ENCODE measurements at regions of chr9 and their contacts with region 1.

Region 1: DNA sequence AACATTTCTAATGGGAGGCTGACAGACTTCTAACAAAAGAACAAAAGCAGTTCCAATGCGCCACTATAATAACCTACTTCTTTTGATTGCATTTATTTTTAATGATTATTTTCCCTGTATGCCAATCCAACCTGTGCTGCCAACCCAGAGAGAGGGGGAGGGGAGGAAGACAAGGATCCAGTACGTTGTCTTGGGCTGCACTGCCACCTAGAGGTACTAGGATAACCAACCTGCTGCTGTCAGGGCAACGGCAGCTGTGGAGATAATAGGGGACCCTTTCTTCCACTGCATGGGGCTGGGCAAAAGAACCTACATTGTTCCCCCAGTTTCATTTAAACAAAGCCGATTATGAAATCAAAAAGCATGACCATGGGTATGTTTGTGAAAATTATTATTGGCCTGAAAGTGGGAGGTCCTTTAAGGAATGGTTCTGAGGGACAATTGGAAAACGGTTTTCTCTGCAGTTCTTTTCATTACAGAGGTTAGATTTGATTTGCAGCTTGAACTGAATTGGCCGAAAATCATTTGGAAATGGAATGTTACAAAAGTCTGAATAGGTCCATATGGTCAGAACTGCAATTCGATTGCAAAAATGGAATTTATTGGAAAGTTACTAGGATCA is 101.3 kb downstream of the RASEF start:
- DNase-seq: peak; percentile 48 to 96 (median 80)

Region 2: DNA sequence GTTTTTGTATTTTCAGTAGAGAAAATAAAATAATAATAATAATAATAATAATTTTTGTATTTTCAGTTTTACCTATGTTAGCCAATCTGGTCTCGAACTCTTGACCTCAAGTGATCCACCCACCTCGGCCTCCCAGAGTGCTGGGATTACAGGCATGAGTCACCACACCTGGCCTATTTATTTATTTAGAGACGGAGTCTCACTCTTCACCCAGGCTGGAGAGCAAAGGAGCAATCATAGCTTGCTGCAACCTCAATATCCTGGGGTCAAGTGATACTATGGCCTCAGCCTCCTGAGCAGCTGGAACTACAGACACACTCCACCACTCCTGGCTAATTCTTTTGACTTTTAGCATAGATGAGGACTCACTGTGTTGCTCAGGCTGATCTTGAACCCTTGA is 1439.7 kb before region 1 on chr9:
- intact Hi-C with region 1: loop called (anchors 5 kb)
- DNase-seq: no peak

Region 3: GRCh38 chr9:82532504-82533180 is 429.0 kb before region 1 on chr9:
- intact Hi-C with region 1: loop called (anchors 2 kb)
- DNase-seq: no peak

Region 4: GRCh38 chr9:82880336-82881050 is 81.1 kb before region 1 on chr9:
- intact Hi-C with region 1: no loop called
- DNase-seq: no peak

Region 5: GRCh38 chr9:82949203-82949602 is 12.4 kb before region 1 on chr9:
- intact Hi-C with region 1: no loop called
- DNase-seq: no peak

Region 6: GRCh38 chr9:83006378-83006777 is 44.8 kb after region 1 on chr9:
- intact Hi-C with region 1: no loop called
- DNase-seq: no peak

Region 7: GRCh38 chr9:83097633-83098032 is 136.0 kb after region 1 on chr9:
- intact Hi-C with region 1: no loop called
- DNase-seq: no peak